Right cardiac atrium (tissue), 5 donors: ENCODE measurements at regions of chr4 and their contacts with region 1.

Region 1: DNA sequence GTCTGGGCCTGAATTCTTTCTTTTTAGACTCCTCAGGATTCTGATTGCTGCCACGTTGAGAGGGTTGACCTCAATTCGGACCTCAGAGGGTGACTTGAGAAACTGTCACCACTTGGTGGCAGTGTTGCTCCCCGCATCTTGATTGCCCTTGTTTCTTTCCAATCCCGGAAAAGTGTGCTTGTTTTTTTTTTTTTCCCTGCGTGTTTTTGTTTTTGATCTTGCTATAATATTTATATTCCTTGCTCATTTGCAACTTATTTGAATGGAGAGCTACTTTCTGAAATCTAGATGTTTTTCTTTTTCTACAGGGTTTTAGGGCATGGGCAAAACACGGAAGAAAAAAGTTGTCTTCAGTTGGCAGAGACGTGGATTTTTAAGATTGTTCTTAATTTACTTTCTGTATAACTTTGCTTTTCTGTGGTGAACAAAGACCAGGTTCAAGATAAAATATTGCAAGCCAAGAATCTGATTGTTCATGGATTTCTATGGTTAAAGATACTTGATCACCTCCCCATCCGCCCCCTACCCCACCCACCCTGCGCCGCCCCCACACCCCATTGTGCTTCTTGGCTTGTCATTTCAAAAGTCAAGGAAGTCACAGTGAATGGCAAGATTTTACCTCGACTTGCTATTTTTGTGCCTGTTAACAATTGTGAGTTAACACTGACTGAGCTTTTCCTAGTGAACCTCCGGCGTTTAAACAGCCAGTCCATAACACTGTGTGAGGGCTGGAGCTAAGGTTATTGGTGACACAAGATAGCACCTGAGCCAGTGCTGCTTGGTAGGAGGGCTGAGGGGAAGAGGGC is 102.1 kb downstream of the PTTG2 start:
- DNase-seq: peak; percentile 76 to 89 (median 86)
- ATAC-seq: peak; percentile 69 to 77
- H3K4me3 ChIP-seq: peak overlapping the region; percentile 46
- H3K27ac ChIP-seq: peak overlapping the region; percentile 95
- H3K4me1 ChIP-seq: peaks cover 4% of the 10 kb centered on the region
- H3K27me3 ChIP-seq: no peaks in the 10 kb centered on the region

Region 2: DNA sequence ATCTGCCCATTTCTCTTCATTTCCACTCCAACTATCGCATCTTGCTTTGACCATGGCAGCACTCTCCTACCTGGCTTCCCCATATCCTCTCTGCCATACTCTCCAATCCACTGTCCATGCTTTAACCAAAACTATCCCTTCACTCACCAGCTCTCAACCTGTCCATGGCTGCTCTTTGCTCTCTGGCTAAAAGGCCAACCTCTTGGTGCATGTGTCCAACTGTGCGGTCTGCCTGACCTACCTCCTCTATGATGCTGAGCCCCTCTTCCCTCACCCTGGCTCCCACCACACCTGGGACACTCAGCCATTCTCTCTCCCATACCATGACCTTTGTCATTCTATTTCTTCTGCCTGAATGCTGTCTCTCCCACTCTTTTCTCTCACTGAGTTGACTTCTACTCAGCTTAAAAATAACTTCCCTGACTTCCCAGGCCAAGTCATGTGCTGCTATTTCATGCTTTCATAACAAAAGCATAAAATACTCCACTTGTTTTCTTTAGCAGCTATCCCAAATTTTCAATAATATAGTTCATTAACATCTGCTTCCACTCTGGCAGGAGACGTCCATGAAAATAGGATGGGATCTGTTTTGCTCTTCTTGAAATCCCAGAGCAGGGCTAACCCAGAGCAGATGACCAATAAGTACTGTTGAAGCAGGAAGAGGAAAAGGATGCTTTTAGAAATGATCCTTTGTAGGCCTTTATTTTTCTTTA is 571.9 kb after region 1 on chr4:
- intact Hi-C with region 1: no loop called
- DNase-seq: no peak
- ATAC-seq: no peak
- H3K4me3 ChIP-seq: no peak overlapping the region
- H3K27ac ChIP-seq: no peak overlapping the region
- H3K4me1 ChIP-seq: peaks cover 3% of the 10 kb centered on the region
- H3K27me3 ChIP-seq: no peaks in the 10 kb centered on the region

Region 3: DNA sequence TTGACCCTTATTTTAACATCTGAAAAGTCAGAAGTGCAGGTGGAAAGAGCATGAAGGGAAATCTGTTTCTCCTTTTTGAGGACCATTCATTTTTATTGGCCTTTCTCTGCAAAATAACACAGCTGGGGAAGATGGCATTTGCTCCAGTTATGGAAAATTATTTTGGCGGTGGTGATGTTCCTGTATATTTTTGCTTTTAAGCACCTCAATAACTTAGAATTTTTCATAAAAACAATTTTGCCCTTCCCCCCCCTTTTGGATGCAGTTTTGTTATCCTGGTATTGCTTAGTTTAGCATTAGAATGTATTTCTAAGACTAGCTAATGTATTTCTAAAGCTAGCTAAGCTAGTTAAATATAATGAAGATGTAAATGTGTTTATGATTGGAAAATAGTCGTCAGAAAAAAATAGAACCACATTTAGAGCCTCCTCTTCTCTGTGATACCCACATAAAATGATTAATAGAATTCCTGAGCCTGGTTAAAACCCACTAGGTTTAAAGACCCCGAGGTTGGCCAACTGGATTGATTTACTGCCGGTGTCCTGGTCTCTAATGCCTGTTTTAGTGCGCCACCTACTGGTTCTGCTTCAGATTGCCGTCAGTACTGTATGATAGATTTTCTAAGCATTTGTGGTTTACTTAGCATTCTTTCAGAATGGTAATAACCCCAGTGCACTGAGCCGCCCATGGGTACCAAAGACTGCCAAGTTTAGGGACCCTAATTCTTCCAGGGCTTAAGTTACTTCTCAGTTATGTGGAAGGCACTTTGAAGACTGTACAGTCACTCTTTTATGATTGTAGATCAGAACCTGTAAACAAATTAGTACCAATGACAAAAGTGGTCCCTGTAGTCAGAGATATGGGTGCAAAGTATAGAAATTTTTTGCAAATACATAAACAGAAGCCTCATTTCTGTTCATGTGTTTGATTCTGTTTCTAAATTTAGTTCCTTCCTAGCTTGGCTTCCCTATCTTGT is 613.1 kb after region 1 on chr4:
- intact Hi-C with region 1: loop called in 2 of 4 experiments (anchors 5 kb)
- DNase-seq: peak; percentile 69 to 85 (median 72)
- ATAC-seq: peak; percentile 32 to 43
- H3K4me3 ChIP-seq: no peak overlapping the region
- H3K27ac ChIP-seq: no peak overlapping the region
- H3K4me1 ChIP-seq: peaks cover 28% of the 10 kb centered on the region
- H3K27me3 ChIP-seq: no peaks in the 10 kb centered on the region

Region 4: GRCh38 chr4:38730830-38731646 is 668.7 kb after region 1 on chr4:
- intact Hi-C with region 1: loop called in 3 of 4 experiments (anchors 2 to 10 kb)
- DNase-seq: peak; percentile 81 to 94 (median 93)
- ATAC-seq: peak; percentile 85 to 88
- H3K4me3 ChIP-seq: no peak overlapping the region
- H3K27ac ChIP-seq: no peak overlapping the region
- H3K4me1 ChIP-seq: no peaks in the 10 kb centered on the region
- H3K27me3 ChIP-seq: no peaks in the 10 kb centered on the region